ENCODE measurements at regions of chr6 and their contacts with region 1.

Region 1: GRCh38 chr6:144278659-144279314 is 6.3 kb upstream of the UTRN start:
- DNase-seq: no peak
- ATAC-seq: no peak
- H3K4me3 ChIP-seq: no peak overlapping the region
- H3K27ac ChIP-seq: no peak overlapping the region
- H3K4me1 ChIP-seq: peaks cover 0 to 6% (median 1%) of the 10 kb centered on the region in 12 donors
- H3K27me3 ChIP-seq: no peaks in the 10 kb centered on the region
- CTCF ChIP-seq: no peak
- POLR2A ChIP-seq: no peak

Region 2: GRCh38 chr6:144232176-144232831 is 46.5 kb before region 1 on chr6:
- intact Hi-C with region 1: loop called in 2 of 10 experiments (anchors 5 to 10 kb)
- DNase-seq: no peak
- ATAC-seq: no peak
- H3K4me3 ChIP-seq: no peak overlapping the region
- H3K27ac ChIP-seq: peak overlapping the region in 6 of 12 donors; percentile 3 to 48 (median 15)
- H3K4me1 ChIP-seq: peaks cover 0 to 26% (median 9%) of the 10 kb centered on the region in 12 donors
- H3K27me3 ChIP-seq: no peaks in the 10 kb centered on the region
- CTCF ChIP-seq: no peak
- POLR2A ChIP-seq: no peak